Activated CD8-positive, alpha-beta T cell treated with anti-CD3 and anti-CD28 coated beads for 36 hours (primary cell): ENCODE measurements at regions of chr11 and their contacts with region 1.

Region 1: GRCh38 chr11:78798660-78799059 is 224.0 kb upstream of the NARS2 start:
- DNase-seq: peak; percentile 59
- ATAC-seq: peak; percentile 81
- H3K4me3 Mint-ChIP-seq: no peak overlapping the region
- H3K27ac Mint-ChIP-seq: no peak overlapping the region
- H3K4me1 Mint-ChIP-seq: no peaks in the 10 kb centered on the region
- H3K27me3 Mint-ChIP-seq: peaks cover 2% of the 10 kb centered on the region
- CTCF ChIP-seq: peak; percentile 73

Region 2: DNA sequence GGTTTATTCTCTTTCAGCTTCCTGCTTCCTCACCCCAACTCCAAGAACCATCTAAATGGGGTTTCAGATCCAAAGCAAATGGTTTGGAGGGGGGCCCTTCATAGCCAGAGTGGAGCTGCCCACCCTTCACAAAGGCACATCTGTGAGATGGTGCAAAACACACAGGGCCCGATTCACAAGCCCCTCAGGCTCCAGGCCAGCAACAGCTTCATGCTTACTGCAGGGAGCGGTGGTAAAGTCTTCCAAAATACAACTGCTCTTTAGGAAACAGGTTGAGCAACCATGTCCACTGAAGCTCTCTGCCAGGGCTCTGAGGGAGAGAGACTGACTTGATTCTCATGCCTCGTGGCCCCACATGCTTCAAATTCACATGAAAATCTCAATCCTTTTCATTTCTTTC is 11.0 kb before region 1 on chr11:
- CTCF ChIA-PET with region 1: interaction called, 20 read pairs
- POLR2A ChIA-PET with region 1: no interaction called
- intact Hi-C with region 1: no loop called
- DNase-seq: no peak
- ATAC-seq: no peak
- H3K4me3 Mint-ChIP-seq: no peak overlapping the region
- H3K27ac Mint-ChIP-seq: no peak overlapping the region
- H3K4me1 Mint-ChIP-seq: no peaks in the 10 kb centered on the region
- H3K27me3 Mint-ChIP-seq: peaks cover 3% of the 10 kb centered on the region
- CTCF ChIP-seq: no peak

Region 3: DNA sequence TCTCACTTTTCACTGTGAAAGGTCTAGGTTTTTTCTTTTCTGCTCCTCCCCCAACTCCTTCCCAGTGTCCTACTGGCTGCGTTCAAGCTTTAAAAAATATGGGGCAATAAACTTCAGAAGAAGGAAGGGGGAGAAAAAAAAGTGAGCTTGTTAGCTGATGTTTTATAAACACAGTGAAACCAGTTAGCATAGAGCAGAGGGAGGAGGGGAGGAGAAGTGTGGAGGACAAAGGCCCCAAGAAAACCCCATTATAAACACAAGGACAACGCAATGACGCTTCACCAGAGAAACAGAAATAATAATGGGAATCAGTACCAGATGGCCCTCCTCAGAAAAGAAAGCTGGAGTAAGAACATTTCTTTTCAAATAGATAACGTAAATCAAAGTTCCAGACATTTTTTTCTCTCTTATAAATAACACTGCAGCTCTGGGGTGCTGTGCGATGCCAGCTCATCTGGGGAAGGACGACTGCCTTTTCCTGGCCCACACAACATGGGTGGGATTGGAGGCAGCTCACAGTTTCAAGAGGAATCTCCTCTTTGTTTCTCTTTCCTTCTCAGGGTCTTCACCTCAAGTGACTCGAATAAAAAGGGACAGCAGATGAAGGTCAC is 11.4 kb after region 1 on chr11:
- CTCF ChIA-PET with region 1: interaction called, 19 read pairs
- POLR2A ChIA-PET with region 1: no interaction called
- intact Hi-C with region 1: no loop called
- DNase-seq: no peak
- ATAC-seq: no peak
- H3K4me3 Mint-ChIP-seq: no peak overlapping the region
- H3K27ac Mint-ChIP-seq: no peak overlapping the region
- H3K4me1 Mint-ChIP-seq: no peaks in the 10 kb centered on the region
- H3K27me3 Mint-ChIP-seq: no peaks in the 10 kb centered on the region
- CTCF ChIP-seq: no peak

Region 4: DNA sequence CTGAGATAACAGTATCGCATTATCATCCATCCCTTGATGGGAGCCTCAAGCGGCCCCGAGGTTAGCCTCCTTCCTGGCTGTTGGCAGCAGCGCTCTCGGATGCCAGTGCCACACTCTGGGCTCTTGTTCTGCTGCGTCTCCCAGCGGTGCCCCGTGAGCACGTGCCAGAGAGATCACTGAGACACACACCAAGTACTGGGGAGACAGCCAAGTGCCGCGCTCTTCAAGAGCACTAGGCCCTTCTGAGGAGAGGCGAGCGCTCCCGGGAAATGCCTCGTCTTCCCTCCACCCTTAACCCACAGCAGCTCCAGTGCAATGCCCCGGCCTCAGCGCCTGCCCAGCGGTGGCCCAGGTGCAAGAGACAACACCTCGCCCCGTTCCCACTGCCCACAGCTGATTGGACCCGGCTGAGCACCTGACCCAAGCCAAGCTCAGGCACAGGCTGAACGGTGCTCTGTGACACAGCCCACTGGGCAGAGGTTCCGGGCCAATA is 24.3 kb after region 1 on chr11:
- CTCF ChIA-PET with region 1: no interaction called
- POLR2A ChIA-PET with region 1: no interaction called
- intact Hi-C with region 1: no loop called
- DNase-seq: no peak
- ATAC-seq: no peak
- H3K4me3 Mint-ChIP-seq: no peak overlapping the region
- H3K27ac Mint-ChIP-seq: no peak overlapping the region
- H3K4me1 Mint-ChIP-seq: no peaks in the 10 kb centered on the region
- H3K27me3 Mint-ChIP-seq: no peaks in the 10 kb centered on the region
- CTCF ChIP-seq: no peak

Region 5: DNA sequence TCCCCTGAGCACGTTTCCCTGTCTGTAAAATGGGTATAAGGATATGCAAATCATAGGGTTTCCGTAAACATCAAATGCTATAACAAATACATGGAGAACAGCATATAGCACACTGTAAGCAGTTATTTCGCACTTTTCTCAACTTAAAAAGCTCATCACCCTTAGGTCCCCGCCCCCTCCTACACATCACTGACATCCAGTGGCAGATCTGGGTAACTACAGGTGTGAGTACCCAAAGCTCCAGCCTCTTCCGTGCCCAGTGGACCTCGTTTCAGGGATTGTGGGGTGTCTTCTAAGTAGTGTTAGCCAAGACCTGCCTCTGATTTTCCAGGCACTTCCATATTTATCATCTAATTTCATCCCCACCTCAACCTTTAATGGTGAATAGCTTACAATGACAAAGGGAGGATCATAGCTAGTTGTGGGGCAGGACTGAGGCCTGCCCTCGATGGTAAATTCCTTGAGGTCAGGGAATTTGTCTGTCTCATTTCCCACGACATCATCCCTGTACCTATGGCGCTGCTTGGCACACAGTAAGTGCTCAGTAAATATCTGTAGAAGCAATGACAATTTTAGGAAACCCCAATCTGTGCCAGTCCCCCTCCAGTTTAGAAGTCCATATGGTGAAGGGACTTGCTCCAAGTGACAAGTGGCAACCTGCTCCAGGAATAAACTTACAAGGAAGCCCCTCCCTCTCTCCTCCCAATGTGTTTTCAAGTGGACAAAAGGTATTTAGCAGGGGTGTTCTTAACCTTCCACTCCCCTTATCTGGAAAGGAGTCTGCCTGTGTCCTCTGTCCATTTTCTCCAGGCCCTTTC is 301.6 kb after region 1 on chr11:
- CTCF ChIA-PET with region 1: interaction called, 10 read pairs
- POLR2A ChIA-PET with region 1: no interaction called
- intact Hi-C with region 1: no loop called
- DNase-seq: peak; percentile 52
- ATAC-seq: peak; percentile 74
- H3K4me3 Mint-ChIP-seq: no peak overlapping the region
- H3K27ac Mint-ChIP-seq: no peak overlapping the region
- H3K4me1 Mint-ChIP-seq: no peaks in the 10 kb centered on the region
- H3K27me3 Mint-ChIP-seq: peaks cover 2% of the 10 kb centered on the region
- CTCF ChIP-seq: peak; percentile 60

Region 6: DNA sequence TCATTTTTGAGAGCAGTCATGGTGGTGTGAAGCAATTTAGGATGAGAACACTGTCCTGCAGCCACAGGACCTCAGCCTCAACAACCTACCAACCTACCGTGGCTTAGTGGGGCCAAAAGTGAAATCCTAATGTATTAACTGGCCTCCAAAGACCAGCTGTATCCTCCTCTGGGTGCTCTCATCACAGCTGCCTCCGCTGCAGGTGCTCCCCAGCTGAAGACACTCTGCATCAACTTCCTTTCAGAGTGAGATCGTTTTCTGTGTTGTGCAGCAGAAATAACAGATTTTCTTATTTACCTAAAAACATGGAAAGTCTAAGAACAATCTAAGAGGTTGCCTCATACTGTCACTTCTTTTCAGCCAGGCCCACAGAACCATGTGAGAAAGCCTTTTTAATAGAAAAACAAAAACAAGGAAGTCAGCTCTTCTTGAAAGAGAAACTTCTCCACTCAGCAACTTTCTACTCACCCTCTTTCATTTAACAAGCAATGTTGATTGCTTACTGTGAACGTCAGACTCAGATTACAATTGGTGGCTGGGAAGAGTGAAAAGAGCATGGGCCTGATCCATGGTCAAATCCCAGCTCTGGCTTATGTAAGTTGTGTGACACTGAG is 506.0 kb after region 1 on chr11:
- CTCF ChIA-PET with region 1: no interaction called
- POLR2A ChIA-PET with region 1: no interaction called
- intact Hi-C with region 1: no loop called
- DNase-seq: no peak
- ATAC-seq: no peak
- H3K4me3 Mint-ChIP-seq: no peak overlapping the region
- H3K27ac Mint-ChIP-seq: no peak overlapping the region
- H3K4me1 Mint-ChIP-seq: no peaks in the 10 kb centered on the region
- H3K27me3 Mint-ChIP-seq: no peaks in the 10 kb centered on the region
- CTCF ChIP-seq: no peak